HCT116 (cell line): ENCODE measurements at regions of chr22 and their contacts with region 1.

Region 1: DNA sequence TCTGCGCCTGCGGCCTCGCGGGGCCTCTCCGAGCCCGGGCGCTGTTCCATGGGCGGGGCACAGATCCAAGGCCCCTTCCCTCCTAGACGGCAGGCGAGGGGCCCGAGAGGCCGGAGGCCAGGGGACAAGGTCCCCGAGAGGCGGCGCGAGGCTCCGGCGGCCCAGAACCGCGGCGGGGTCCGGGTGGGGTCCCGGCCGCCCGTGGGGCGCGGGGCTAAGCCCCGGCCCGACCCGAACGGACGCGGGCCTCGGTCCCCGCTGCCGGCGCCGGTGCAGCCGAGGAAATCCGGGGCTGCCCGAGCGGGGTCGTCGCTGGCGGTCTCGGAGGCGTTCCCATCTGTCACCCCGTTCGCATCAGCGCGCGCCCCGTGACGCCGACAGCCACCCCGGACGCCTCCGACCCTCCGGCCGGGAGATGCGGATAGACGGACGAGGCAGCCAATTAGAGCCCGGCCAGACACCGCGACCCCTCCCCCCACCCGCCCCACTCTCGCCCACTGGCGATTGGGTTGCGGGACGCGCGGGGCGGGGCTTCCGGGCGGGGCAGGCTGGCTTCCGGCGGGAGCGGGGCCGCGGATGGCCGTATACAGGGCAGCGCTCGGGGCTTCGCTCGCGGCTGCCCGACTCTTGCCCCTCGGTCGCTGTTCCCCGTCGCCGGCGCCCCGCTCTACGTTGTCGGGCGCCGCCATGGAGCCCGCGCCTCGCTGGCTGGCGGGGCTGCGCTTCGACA is at the start of gene SELENOO:
- DNase-seq: peak; percentile 72
- ATAC-seq: peak; percentile 89
- H3K4me3 ChIP-seq: peak within 1 kb of the TSS; percentile 61 to 65
- H3K27ac ChIP-seq: peak within 1 kb of the TSS; percentile 93
- H3K4me1 ChIP-seq: peaks cover 9 to 19% of the 10 kb centered on the region in 2 experiments; a peak in 3 of 4 replicates
- H3K27me3 ChIP-seq: no peaks in the 10 kb centered on the region
- CTCF ChIP-seq: no peak
- POLR2A ChIP-seq: peak; percentile 51
- RAD21 ChIP-seq: no peak
- total RNA-seq, gene SELENOO: 29.6 TPM

Region 2: DNA sequence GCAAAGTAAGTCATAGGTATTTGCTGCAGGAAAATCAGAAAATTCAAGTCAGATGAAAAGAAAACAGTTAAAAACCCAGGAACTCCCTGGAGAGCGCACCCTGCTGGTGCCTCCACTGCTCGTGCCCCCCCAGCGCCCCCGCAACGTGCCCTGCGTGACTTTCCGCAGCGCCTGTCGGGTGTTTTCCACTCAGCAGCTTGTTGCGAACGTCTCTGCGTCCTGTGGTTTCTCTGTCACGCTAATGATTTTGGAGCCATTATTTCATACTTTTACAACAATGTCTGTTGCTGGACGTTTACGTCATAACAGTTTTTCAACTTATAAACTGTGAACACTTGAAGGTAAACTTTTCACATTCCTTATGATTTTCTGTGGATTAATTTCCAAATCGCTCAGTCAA is 277.2 kb before region 1 on chr22:
- CTCF ChIA-PET with region 1: no interaction called
- POLR2A ChIA-PET with region 1: no interaction called
- RAD21 ChIA-PET with region 1: no interaction called
- intact Hi-C with region 1: no loop called
- DNase-seq: no peak
- ATAC-seq: no peak
- H3K4me3 ChIP-seq: no peak overlapping the region
- H3K27ac ChIP-seq: no peak overlapping the region
- H3K4me1 ChIP-seq: peaks cover 3 to 9% of the 10 kb centered on the region in 2 experiments; a peak in 3 of 4 replicates
- H3K27me3 ChIP-seq: no peaks in the 10 kb centered on the region
- CTCF ChIP-seq: peak in 2 of 3 experiments; percentile 28 to 43; a peak in 4 of 6 replicates
- POLR2A ChIP-seq: no peak
- RAD21 ChIP-seq: no peak

Region 3: GRCh38 chr22:49936018-49936952 is 264.3 kb before region 1 on chr22:
- CTCF ChIA-PET with region 1: no interaction called
- POLR2A ChIA-PET with region 1: no interaction called
- RAD21 ChIA-PET with region 1: no interaction called
- intact Hi-C with region 1: loop called (anchors 10 kb)
- DNase-seq: no peak
- ATAC-seq: peak; percentile 85
- H3K4me3 ChIP-seq: peak overlapping the region; percentile 20 to 44
- H3K27ac ChIP-seq: peak overlapping the region; percentile 75
- H3K4me1 ChIP-seq: peaks cover 27 to 42% of the 10 kb centered on the region in 2 experiments
- H3K27me3 ChIP-seq: no peaks in the 10 kb centered on the region
- CTCF ChIP-seq: no peak
- POLR2A ChIP-seq: no peak
- RAD21 ChIP-seq: no peak

Region 4: GRCh38 chr22:50314455-50315288 is 114.0 kb after region 1 on chr22:
- CTCF ChIA-PET with region 1: no interaction called
- POLR2A ChIA-PET with region 1: no interaction called
- RAD21 ChIA-PET with region 1: no interaction called
- intact Hi-C with region 1: no loop called
- DNase-seq: no peak
- ATAC-seq: peak; percentile 87
- H3K4me3 ChIP-seq: no peak overlapping the region
- H3K27ac ChIP-seq: no peak overlapping the region; the same call in 1 of the 2 replicates
- H3K4me1 ChIP-seq: peaks cover 0 to 14% of the 10 kb centered on the region in 2 experiments; a peak in 2 of 4 replicates
- H3K27me3 ChIP-seq: no peaks in the 10 kb centered on the region
- CTCF ChIP-seq: no peak
- POLR2A ChIP-seq: no peak
- RAD21 ChIP-seq: no peak